IMR-90 (cell line): ENCODE measurements at regions of chr14 and their contacts with region 1.

Region 1: DNA sequence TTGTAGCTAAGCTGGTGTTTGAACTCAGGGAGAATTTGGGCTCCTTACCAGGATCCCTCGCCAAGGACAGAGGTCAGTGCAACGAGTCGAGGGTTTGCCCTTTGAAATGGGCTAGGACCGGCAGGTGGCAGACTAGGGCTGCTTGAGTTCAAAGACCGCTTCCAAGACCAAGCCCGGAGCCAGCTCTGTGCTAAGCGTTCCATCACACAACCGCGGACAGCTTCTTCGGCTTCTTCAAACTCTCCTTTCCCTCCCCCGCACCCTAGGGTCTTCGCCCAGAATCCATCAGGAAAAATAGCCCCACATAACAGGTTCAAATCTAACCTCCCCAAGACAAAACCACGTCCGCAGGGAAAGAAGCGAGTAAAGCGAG is 705 bp upstream of the FLVCR2 start:
- DNase-seq: peak; percentile 77
- ATAC-seq: peak; percentile 88
- H3K4me3 ChIP-seq: peak overlapping the region; percentile 45
- H3K27ac ChIP-seq: 0 out of 2 replicates have a peak overlapping the region, but pooled peaks have one; percentile 4
- H3K4me1 ChIP-seq: peaks cover 8% of the 10 kb centered on the region; the same call in 1 of the 2 replicates
- H3K27me3 ChIP-seq: peaks cover 14% of the 10 kb centered on the region
- CTCF ChIP-seq: peak; percentile 77
- POLR2A ChIP-seq: no peak
- RAD21 ChIP-seq: peak; percentile 87

Region 2: DNA sequence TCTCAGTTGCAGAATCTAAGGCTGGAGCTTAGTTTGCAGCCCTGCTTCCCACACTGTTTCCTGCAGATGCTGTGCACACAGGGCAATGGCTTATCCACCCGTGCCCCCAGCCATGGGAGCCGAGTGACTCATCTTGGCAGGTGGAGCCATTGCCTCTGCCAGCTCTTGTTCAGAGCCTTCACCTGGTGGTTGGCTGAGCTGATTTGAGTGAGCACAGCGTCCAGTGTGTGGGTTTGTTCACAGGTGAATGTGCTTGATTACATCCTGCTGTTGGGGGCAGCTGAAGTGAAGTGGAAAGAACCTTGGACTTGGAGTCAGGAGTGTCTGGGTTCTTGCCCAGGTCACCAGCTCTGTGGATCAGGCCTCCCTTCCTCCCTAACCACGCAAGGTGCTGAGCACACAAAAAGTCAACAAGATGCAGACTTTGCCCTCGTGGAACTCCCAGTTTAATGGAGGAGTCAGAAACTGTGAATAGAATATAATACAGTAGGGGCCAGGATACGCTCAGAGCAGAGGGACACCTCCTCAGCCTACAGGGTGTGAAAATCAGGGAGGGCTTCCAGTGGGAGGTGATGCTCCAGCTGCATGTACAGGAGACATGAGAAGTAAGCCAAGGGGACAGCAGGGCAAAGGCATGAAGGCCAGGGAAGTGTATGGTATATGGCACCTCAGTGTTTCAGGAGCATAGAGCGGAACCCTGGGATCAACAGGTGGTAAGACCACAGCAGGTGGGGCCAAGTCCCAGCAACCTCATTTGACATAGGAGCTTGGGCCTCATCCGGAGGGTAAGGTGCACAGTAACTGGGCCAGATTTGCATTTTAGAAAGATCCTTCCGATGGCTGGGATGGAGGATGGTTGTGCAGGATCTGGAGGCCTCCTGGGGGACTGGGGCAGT is 127.1 kb before region 1 on chr14:
- CTCF ChIA-PET with region 1: no interaction called
- POLR2A ChIA-PET with region 1: no interaction called
- dilution Hi-C with region 1: no loop called
- in situ Hi-C with region 1: no loop called
- intact Hi-C with region 1: no loop called
- DNase-seq: peak; percentile 40
- ATAC-seq: no peak
- H3K4me3 ChIP-seq: no peak overlapping the region
- H3K27ac ChIP-seq: no peak overlapping the region
- H3K4me1 ChIP-seq: peaks cover 51% of the 10 kb centered on the region
- H3K27me3 ChIP-seq: no peaks in the 10 kb centered on the region
- CTCF ChIP-seq: no peak
- POLR2A ChIP-seq: no peak
- RAD21 ChIP-seq: no peak

Region 3: GRCh38 chr14:75597149-75597548 is 19.4 kb after region 1 on chr14:
- CTCF ChIA-PET with region 1: interaction called, 14 read pairs
- POLR2A ChIA-PET with region 1: no interaction called
- dilution Hi-C with region 1: no loop called
- in situ Hi-C with region 1: no loop called
- intact Hi-C with region 1: no loop called
- DNase-seq: no peak
- ATAC-seq: no peak
- H3K4me3 ChIP-seq: no peak overlapping the region
- H3K27ac ChIP-seq: no peak overlapping the region
- H3K4me1 ChIP-seq: no peaks in the 10 kb centered on the region
- H3K27me3 ChIP-seq: peaks cover 9% of the 10 kb centered on the region
- CTCF ChIP-seq: no peak
- POLR2A ChIP-seq: no peak
- RAD21 ChIP-seq: no peak

Region 4: DNA sequence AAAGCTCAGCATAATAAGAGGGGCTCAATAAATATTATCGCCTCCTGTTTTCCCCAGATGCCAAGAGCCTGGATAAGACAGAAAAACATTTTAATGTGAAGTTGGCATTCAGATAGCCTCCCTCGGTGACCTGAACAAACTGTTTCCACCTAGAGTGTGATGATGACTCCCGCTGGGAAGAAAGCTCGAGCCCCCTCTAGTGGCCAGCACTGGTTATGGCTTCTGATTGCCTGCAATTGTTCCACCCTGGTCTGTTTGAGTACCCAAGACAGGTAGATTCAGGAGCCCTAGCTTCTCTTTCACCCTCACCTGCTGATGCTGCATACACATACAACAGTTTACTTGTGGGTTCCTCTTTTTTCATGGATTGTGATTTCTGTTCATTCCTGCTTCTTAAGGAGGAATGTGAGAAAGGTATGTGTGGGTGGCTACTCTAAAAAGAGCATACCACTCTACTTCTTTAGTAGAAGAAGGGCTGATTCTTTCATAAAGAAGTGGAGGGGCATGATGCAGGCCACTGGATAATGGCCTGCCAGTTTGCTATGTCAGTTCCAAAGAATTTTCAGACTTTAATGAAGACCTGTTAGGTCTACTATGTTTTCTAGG is 76.5 kb after region 1 on chr14:
- CTCF ChIA-PET with region 1: interaction called, 125 read pairs
- POLR2A ChIA-PET with region 1: interaction called, 3 read pairs
- dilution Hi-C with region 1: no loop called
- in situ Hi-C with region 1: loop called (anchors 5 kb)
- intact Hi-C with region 1: loop called (anchors 1 kb)
- DNase-seq: peak; percentile 53
- ATAC-seq: peak; percentile 99
- H3K4me3 ChIP-seq: no peak overlapping the region
- H3K27ac ChIP-seq: no peak overlapping the region
- H3K4me1 ChIP-seq: no peaks in the 10 kb centered on the region
- H3K27me3 ChIP-seq: no peaks in the 10 kb centered on the region
- CTCF ChIP-seq: peak; percentile 95
- POLR2A ChIP-seq: no peak
- RAD21 ChIP-seq: peak; percentile 90

Region 5: DNA sequence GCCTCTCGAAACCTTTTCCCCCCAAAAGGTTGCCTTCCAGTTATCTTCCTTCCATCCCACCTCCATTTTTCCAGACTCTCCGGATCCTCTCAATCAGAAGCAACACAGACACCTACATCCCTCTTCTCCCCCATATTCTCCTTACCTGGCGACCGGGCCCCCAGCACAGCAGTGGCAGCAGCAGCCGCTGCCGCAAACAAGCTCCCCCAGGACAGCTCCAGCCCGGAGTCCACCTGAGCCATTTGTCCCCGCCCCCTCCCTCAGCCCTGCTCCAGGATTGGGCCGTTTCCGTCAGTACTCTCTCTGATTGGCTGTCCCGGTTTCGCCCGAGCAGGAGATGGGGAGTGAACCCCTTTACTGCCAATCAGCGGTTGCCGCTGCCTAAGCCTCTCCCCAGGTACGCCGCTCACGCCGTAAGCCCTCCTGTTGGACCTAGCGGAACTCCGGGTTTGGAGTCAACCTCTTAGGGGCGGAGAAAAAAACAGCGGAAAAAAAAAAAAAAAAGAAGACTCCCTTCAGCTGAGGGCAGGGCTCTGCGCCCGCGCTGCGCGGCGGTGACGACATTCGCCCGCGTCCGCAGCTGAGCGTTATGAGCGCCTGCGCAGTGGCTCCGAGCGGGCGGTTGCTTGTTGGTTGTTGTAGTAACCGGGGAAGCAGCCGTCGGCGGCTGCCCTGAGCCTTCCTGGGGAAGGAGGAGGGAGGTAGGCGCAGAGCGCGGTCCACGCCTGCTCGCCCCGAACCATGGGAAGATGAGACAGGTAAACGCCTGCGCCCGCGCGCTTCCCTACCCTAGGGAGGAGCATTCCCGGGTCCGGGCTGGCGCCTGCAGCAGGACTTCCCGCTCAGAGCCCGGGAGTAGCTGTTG is 83.1 kb after region 1 on chr14 and contains the starts of genes ERG28 and TTLL5:
- CTCF ChIA-PET with region 1: interaction called, 125 read pairs
- POLR2A ChIA-PET with region 1: no interaction called
- dilution Hi-C with region 1: no loop called
- in situ Hi-C with region 1: no loop called
- intact Hi-C with region 1: no loop called
- DNase-seq: peak; percentile 99
- ATAC-seq: peak; percentile 99
- H3K4me3 ChIP-seq: peak within 1 kb of the TSS; percentile 88
- H3K27ac ChIP-seq: peak within 1 kb of the TSS; percentile 19; the same call in 1 of the 2 replicates
- H3K4me1 ChIP-seq: no peaks in the 10 kb centered on the region
- H3K27me3 ChIP-seq: no peaks in the 10 kb centered on the region
- CTCF ChIP-seq: no peak
- POLR2A ChIP-seq: peak; percentile 51
- RAD21 ChIP-seq: no peak
- total RNA-seq, gene ERG28: 0.90 and 1.9 TPM in 2 replicates
- total RNA-seq, gene TTLL5: 15.0 and 16.7 TPM in 2 replicates

Region 6: DNA sequence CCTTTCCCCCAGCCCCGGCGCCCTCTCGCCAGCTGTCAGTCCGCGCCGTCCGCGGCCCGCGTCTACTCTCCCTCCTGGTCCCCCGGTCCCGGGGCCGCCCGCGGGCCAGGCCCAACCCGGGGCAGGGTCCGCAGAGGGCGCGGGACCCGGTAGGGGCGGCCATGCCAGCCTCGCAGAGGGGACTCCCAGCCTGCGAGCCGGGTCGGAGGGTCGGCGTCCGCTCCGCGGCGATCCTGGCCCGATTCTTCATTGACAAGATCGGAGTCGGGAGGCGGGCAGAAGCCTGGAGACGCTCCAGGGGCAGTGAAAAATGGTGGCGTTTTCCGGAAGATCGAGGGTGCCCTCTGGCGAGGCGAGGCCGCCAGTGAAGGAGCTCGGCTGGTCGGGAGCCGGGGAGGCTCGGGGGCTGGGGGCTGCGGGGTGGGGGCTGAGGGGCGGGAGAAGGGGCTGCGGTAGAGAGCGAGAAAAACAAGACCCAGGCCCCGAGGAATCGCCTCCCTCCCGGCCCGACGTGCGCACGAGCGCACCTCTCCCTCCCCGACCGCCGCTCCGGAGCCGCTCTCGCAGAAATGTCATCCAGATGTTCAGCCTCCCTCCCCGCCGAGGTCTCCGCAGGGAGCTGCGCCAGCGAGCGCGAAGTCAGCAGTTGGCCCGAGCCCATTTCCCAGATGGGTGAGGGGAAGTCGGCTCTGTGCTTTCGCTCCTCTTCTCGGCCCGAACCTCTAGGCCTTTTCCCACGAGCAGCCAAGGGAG is 404.7 kb after region 1 on chr14:
- CTCF ChIA-PET with region 1: interaction called, 4 read pairs
- POLR2A ChIA-PET with region 1: no interaction called
- dilution Hi-C with region 1: no loop called
- in situ Hi-C with region 1: loop called (anchors 10 kb)
- intact Hi-C with region 1: loop called (anchors 5 kb)
- DNase-seq: peak; percentile 77
- ATAC-seq: peak; percentile 72
- H3K4me3 ChIP-seq: peak overlapping the region; percentile 50
- H3K27ac ChIP-seq: peak overlapping the region; percentile 66
- H3K4me1 ChIP-seq: peaks cover 7% of the 10 kb centered on the region; the same call in 1 of the 2 replicates
- H3K27me3 ChIP-seq: no peaks in the 10 kb centered on the region; the same call in 1 of the 2 replicates
- CTCF ChIP-seq: peak; percentile 72
- POLR2A ChIP-seq: peak; percentile 7; the same call in 1 of the 2 replicates
- RAD21 ChIP-seq: peak; percentile 81